ENCODE measurements at regions of chr16 and their contacts with region 1.

Region 1: DNA sequence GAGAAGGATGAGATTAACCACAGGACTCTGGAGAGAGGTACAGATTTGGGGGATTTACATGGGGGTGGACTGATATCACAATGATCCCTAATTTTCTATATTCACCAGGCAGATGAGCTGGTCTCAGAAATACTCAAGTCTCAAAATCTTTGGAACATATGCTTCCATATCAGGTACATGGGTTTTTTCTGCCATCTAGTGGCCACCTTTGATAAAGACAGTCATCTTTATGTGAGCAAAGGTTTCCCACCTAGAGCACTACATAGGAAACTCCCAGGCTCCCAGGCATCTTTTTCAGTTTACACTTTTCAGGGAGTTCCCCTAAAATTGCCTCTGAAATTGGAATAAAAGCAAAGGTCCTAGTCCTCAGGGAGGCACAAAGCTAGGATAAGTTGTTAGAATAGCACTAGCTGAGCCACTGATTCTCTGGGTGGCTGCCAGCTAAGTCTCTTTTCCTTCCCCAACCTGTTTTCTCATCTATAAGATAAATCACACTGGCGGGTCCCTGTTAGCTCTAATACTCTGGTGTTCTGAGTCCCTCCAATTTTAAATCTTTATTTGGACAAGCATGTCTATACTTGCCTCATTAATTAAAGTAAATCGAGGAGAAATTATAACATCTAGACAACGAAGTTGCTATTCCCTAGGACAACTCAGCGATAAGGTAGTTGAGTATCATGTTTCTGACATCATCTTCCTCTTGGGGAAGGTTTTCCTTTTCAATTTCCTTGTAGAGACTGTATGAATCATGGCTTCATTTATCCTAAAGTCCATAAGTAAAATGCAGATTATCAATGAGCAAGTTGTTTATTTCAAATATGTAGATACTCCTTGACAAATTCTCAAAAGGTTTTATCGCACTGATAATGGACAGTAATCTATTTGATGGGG is 19.0 kb upstream of the MON1B start:
- DNase-seq: peak in 1 of 2 donors; percentile 74
- ATAC-seq: peak; percentile 64 to 77 (median 69)
- H3K4me3 ChIP-seq: no peak overlapping the region
- H3K4me3 Mint-ChIP-seq: no peak overlapping the region
- H3K27ac ChIP-seq: no peak overlapping the region
- H3K27ac Mint-ChIP-seq: no peak overlapping the region
- H3K4me1 ChIP-seq: no peaks in the 10 kb centered on the region
- H3K4me1 Mint-ChIP-seq: no peaks in the 10 kb centered on the region
- H3K27me3 ChIP-seq: peaks cover 4% of the 10 kb centered on the region
- H3K27me3 Mint-ChIP-seq: peaks cover 39 to 52% of the 10 kb centered on the region in 2 donors
- CTCF ChIP-seq: peak; percentile 76

Region 2: GRCh38 chr16:75789237-75789636 is 1382.8 kb before region 1 on chr16:
- intact Hi-C with region 1: loop called (anchors 1 kb)
- DNase-seq: peak in 1 of 2 donors; percentile 68
- ATAC-seq: peak in 1 of 3 donors; percentile 48
- H3K4me3 ChIP-seq: no peak overlapping the region
- H3K4me3 Mint-ChIP-seq: no peak overlapping the region
- H3K27ac ChIP-seq: no peak overlapping the region
- H3K27ac Mint-ChIP-seq: no peak overlapping the region
- H3K4me1 ChIP-seq: no peaks in the 10 kb centered on the region
- H3K4me1 Mint-ChIP-seq: no peaks in the 10 kb centered on the region
- H3K27me3 ChIP-seq: peaks cover 3% of the 10 kb centered on the region
- H3K27me3 Mint-ChIP-seq: peaks cover 12 to 25% of the 10 kb centered on the region in 2 donors
- CTCF ChIP-seq: peak; percentile 88

Region 3: DNA sequence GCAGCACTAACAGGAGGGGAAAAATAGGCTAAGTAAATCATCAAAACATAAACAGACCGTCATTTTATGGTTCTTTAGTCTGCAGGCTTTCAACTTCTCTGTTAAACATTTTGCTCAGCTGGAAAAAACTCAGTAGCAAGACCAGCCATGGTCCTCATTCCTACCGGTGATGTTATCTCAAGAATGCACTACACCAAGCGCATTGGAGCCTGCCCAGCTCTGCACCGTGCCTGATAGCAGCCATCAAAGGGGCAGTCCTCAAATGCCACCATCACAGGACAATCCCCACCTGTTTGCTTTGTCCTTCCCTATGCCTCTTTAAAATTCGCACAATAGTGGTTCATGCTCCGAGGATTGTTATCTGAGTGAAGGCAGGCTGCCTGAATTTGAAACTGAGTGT is 162.5 kb before region 1 on chr16:
- intact Hi-C with region 1: no loop called
- DNase-seq: no peak
- ATAC-seq: no peak
- H3K4me3 ChIP-seq: no peak overlapping the region
- H3K4me3 Mint-ChIP-seq: no peak overlapping the region
- H3K27ac ChIP-seq: no peak overlapping the region
- H3K27ac Mint-ChIP-seq: no peak overlapping the region
- H3K4me1 ChIP-seq: no peaks in the 10 kb centered on the region
- H3K4me1 Mint-ChIP-seq: no peaks in the 10 kb centered on the region
- H3K27me3 ChIP-seq: no peaks in the 10 kb centered on the region
- H3K27me3 Mint-ChIP-seq: no peaks in the 10 kb centered on the region
- CTCF ChIP-seq: no peak

Region 4: DNA sequence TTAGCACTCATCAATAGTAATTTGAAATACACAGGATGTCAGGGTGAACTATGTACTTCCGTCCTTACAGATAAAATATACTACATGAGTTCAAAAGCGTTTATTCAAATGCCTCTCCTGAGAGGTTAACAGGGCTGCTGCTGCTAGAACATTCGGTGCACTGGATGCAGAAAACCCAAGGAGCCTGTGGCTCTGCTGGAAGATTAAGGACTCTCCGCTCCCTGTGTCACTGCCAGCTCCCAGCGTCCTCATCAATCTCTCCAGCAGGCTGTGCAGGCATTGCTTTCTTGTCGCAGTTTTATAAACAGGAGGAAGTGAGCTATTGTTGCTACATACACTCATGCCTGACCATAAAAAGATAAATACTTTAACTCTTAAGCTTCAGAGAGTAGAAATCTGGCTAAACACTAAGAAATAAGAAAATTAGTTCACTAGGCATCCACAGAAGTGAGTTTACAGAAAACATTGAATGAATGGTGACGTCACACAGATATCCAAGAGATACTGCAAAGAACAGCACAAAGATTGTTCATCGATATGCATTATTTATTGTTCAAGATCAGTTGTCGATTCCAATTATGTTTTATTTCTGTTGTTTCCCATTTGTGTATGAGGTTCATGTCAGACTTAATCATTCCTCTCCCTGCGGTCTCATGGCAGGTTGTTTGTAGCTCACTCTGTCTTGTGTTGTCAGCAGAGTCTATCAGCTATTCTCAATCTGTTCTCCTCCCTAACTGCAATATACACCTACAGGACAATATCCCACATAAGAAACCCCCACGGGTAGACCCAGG is 108.9 kb before region 1 on chr16:
- intact Hi-C with region 1: no loop called
- DNase-seq: no peak
- ATAC-seq: no peak
- H3K4me3 ChIP-seq: no peak overlapping the region
- H3K4me3 Mint-ChIP-seq: no peak overlapping the region
- H3K27ac ChIP-seq: no peak overlapping the region
- H3K27ac Mint-ChIP-seq: no peak overlapping the region
- H3K4me1 ChIP-seq: no peaks in the 10 kb centered on the region
- H3K4me1 Mint-ChIP-seq: no peaks in the 10 kb centered on the region
- H3K27me3 ChIP-seq: no peaks in the 10 kb centered on the region
- H3K27me3 Mint-ChIP-seq: peaks cover 0 to 3% of the 10 kb centered on the region in 2 donors
- CTCF ChIP-seq: no peak

Region 5: DNA sequence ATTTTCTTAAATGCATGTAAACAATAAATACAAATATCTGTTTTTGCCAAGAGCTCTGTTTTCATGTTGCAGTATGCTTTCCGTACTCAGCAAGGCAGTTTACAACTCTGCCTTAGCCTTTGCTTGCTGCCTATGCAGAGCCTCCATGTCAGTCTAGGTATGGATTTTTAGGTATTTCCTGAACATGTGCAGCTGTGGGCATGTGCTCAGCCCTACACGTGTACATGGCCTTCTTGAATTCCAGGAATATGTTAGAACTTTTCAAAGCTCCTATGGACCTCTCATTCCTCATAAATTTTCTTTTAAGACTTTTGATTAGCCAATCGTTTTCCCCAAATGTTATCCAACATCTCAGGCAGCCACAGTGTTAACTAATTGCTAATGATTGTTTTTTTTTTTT is 91.0 kb after region 1 on chr16:
- intact Hi-C with region 1: no loop called
- DNase-seq: no peak
- ATAC-seq: no peak
- H3K4me3 ChIP-seq: no peak overlapping the region
- H3K4me3 Mint-ChIP-seq: no peak overlapping the region
- H3K27ac ChIP-seq: no peak overlapping the region
- H3K27ac Mint-ChIP-seq: no peak overlapping the region
- H3K4me1 ChIP-seq: no peaks in the 10 kb centered on the region
- H3K4me1 Mint-ChIP-seq: no peaks in the 10 kb centered on the region
- H3K27me3 ChIP-seq: peaks cover 4% of the 10 kb centered on the region
- H3K27me3 Mint-ChIP-seq: peaks cover 17 to 48% of the 10 kb centered on the region in 2 donors
- CTCF ChIP-seq: no peak